B cell (primary cell): ENCODE measurements at regions of chr20 and their contacts with region 1.

Region 1: GRCh38 chr20:45011108-45011526 is 44.8 kb downstream of the STK4 start:
- DNase-seq: peak; percentile 65
- ATAC-seq: peak; percentile 58
- H3K4me3 ChIP-seq: no peak overlapping the region
- H3K4me3 Mint-ChIP-seq: no peak overlapping the region
- H3K27ac ChIP-seq: peak overlapping the region in 1 of 2 donors; percentile 59
- H3K27ac Mint-ChIP-seq: no peak overlapping the region
- H3K4me1 ChIP-seq: no peaks in the 10 kb centered on the region
- H3K4me1 Mint-ChIP-seq: peaks cover 25% of the 10 kb centered on the region
- H3K27me3 ChIP-seq: no peaks in the 10 kb centered on the region
- H3K27me3 Mint-ChIP-seq: no peaks in the 10 kb centered on the region
- CTCF ChIP-seq: peak; percentile 76

Region 2: DNA sequence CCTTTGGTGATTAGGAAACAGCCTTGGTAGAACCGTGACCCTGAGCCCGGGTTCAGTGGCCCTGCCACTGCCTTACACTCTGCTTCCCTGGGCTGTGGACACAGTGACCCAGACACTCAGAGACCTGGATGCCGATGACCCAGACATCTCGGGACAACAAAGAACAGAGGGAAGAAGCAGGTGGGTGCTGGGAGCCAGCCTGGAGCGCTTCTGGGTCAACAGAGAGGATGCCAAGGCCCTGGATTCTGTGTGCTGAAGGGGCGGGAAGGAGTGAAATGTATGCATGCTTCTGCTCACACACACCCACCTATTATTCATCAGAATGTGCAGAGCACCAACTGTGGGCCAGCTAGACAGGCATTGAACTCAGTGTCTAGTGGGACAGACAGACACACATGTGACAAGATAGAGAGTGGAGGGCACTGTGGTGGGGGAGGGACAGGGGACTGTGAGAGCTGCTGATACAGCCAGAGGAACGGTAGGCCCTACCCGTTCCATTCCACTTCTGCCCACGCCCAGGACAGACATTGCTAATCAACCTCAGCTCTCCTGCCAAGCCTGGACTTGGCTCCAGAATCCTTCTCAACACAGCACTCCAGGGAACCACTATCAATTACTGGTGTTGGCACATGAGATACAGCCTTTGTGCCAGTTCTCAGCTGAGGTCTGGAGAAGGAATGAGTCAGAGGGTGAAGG is 245.3 kb before region 1 on chr20:
- CTCF ChIA-PET with region 1: no interaction called
- POLR2A ChIA-PET with region 1: no interaction called
- intact Hi-C with region 1: no loop called
- DNase-seq: no peak
- ATAC-seq: no peak
- H3K4me3 ChIP-seq: no peak overlapping the region
- H3K4me3 Mint-ChIP-seq: no peak overlapping the region
- H3K27ac ChIP-seq: no peak overlapping the region
- H3K27ac Mint-ChIP-seq: no peak overlapping the region
- H3K4me1 ChIP-seq: peaks cover 5 to 9% of the 10 kb centered on the region in 2 donors
- H3K4me1 Mint-ChIP-seq: peaks cover 15% of the 10 kb centered on the region
- H3K27me3 ChIP-seq: peaks cover 0 to 3% (median 1%) of the 10 kb centered on the region in 4 experiments
- H3K27me3 Mint-ChIP-seq: peaks cover 21% of the 10 kb centered on the region
- CTCF ChIP-seq: no peak

Region 3: DNA sequence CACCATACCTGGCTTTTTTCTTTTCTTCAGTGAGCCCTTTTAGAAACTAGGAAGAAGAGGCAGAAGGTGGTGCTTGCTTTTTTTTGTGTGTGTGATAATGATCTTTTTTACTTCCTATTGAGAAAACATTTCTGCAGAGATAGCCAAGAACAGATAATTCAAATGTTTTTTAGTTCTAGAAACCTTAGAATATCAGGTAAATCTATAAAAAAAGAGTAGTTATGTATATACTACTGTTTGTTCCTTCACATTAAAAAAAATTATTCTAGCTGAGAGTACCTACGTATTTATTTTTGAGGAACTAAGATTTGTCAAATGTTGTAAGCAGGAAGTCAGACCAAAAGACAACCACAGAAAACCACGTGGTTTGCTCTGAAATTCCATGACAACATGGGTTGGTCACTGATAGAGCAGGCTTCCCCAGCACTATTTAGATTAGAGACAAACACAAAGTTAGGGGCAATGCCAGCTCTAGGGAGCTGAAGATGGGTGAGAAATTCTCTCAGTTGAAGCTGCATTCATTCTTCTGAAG is 32.0 kb before region 1 on chr20:
- CTCF ChIA-PET with region 1: interaction called, 12 read pairs
- POLR2A ChIA-PET with region 1: no interaction called
- intact Hi-C with region 1: loop called (anchors 5 kb)
- DNase-seq: peak; percentile 93
- ATAC-seq: peak; percentile 91
- H3K4me3 ChIP-seq: peak overlapping the region; percentile 4 to 54 (median 32)
- H3K4me3 Mint-ChIP-seq: peak overlapping the region; percentile 68
- H3K27ac ChIP-seq: peak overlapping the region; percentile 97 to 98
- H3K27ac Mint-ChIP-seq: peak overlapping the region; percentile 95
- H3K4me1 ChIP-seq: peaks cover 34 to 43% of the 10 kb centered on the region in 2 donors
- H3K4me1 Mint-ChIP-seq: peaks cover 65% of the 10 kb centered on the region
- H3K27me3 ChIP-seq: no peaks in the 10 kb centered on the region
- H3K27me3 Mint-ChIP-seq: no peaks in the 10 kb centered on the region
- CTCF ChIP-seq: no peak

Region 4: DNA sequence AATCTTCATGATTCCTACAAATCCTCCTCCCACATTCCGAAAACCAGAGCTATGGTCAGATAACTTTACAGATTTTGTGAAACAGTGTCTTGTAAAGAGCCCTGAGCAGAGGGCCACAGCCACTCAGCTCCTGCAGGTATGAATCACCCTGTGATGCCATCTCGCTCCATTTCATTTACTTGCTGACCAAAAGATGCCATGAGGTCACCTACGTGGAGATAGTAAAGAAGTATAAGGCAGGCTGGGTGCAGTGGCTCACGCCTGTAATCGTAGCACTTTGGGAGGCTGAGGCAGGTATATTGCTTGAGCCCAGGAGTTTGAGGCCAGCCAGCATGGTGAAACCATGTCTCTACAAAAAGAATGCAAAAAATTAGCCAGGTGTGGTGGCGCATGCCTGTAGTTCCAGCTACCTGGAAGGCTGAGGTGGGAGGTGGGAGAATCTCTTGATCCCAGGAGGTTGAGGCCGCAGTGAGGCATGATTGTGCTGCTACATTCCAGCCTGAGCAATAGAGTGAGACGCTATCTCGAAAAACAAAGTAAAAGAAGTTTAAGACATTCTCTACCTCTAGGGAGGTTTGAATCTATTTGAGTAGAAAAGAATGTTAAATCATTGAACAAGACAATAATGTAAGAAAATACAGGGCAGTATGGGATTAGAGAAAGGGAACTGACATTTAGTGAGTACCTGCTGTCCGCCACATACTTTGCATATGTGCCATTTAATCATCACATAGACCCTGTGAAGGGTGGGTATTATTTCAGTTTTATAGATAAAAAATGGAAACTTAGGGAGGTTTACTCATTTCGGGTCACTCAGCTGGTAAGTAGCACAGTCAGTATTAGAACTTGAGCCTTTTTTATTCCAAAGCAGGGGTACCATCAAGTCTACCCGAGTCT is 13.7 kb before region 1 on chr20:
- CTCF ChIA-PET with region 1: interaction called, 20 read pairs
- POLR2A ChIA-PET with region 1: interaction called, 4 read pairs
- intact Hi-C with region 1: no loop called
- DNase-seq: peak; percentile 45
- ATAC-seq: peak; percentile 91
- H3K4me3 ChIP-seq: no peak overlapping the region
- H3K4me3 Mint-ChIP-seq: peak overlapping the region; percentile 68
- H3K27ac ChIP-seq: peak overlapping the region in 1 of 2 donors; percentile 70
- H3K27ac Mint-ChIP-seq: peak overlapping the region; percentile 75
- H3K4me1 ChIP-seq: peaks cover 13 to 23% of the 10 kb centered on the region in 2 donors
- H3K4me1 Mint-ChIP-seq: peaks cover 40% of the 10 kb centered on the region
- H3K27me3 ChIP-seq: no peaks in the 10 kb centered on the region
- H3K27me3 Mint-ChIP-seq: no peaks in the 10 kb centered on the region
- CTCF ChIP-seq: no peak